Left ventricle myocardium superior (tissue), 1 donor: ENCODE measurements at regions of chr14 and their contacts with region 1.

Region 1: DNA sequence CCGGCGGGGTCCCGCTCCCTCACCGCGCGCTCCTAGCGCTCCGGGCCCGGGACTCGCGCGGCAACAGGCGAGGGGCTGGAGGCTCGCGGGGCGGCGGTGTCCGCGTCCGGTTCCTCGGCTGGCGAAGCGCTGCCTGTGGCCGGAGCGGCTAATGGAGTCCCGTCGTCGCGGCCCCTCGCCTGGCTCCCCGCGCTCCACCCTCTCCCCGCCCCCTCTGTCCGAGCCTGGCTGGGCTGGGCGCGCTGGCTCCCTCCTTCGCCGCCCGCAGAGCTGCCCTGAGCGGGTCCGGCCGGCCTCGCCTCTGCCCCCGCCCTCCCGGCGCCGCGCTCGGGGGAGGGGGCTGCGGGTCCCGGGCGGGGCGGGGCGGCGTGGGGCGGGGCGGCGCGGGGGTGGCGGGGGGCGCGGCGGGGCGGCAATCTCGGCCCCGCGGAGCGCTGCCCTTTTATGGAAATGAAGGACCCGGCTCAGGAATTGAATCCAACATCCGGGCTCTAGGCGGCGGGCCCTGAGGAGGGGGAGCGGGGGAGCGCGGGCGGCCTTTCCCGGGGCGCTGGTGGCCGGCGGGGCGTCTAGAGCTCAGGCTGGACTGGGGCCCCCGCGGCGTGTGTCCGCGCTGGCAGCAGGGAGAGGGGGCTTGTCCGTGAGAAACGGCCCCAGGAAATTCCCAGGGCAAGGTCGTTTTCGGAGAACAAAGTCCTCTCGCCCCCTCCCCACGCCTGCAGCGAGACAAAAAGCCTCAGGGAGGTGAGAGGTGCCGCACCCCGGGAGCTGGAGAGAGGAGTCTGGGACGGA is at the start of gene FERMT2:
- DNase-seq: peak; percentile 95
- ATAC-seq: peak; percentile 93
- total RNA-seq, gene FERMT2: 116 TPM

Region 2: DNA sequence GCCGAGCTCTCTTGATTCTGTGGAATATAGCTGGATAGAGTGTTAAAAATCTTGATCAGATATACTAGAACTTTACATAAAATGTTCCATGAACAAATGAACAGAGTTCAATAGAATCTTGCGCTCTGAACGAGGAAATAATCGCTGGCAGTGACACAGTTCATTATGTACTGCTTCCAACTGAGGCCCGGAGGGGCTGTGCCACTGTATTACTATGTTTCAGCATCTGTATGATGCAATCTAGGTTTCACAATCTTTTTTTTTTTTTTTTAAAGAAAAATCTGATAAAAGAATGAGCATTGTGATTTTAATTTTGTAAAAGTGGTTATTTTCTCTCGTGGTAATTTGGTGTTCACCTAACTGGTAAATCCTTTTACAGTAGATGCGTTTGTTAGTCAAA is 77.4 kb before region 1 on chr14:
- intact Hi-C with region 1: loop called (anchors 10 kb)
- DNase-seq: peak; percentile 52
- ATAC-seq: peak; percentile 67

Region 3: GRCh38 chr14:53032161-53032803 is 81.2 kb after region 1 on chr14:
- intact Hi-C with region 1: no loop called
- DNase-seq: no peak
- ATAC-seq: peak; percentile 86